Dendritic cell treated with granulocyte-macrophage colony-stimulating factor and Interleukin-4, amounts not matched to agents 40 ng/mL and 50 ng/mL, for 4 days (primary cell): ENCODE measurements at regions of chr2 and their contacts with region 1.

Region 1: DNA sequence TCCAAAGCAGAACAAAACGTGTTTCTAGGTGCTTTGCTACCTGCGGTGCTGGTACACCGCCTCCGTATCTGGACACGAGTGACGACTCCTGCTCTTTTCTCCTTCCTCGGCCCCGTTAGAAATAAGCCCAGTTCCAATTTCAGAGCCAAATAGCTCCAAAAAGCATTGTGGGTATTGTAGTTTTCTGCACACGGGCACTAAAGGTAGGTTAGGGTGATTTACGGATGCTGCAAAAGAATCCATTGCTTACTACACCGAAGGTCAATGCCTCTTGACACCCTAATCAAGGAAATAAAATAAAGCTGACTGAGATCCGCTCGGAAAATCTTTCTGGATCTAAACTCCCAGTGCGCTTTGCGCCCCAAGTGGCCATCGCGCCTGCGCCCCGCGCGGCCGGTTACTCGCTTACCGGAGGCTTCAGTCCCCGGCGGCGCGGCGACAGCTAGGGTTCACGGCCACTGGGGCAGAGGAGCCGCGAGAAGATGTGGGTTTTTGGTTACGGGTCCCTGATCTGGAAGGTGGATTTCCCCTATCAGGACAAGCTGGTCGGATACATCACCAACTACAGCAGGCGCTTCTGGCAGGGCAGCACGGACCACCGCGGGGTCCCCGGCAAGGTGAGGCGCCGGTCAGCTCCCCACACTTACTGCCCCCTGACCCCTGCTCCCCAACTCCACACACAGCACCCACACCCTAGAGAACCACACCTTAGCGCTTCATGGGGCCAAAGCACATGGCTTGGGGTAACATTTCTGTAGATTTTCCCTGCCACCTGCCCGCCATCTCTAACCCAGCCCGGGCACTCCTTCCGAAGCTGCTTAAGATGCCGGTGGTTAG is at the start of gene CHAC2:
- H3K4me3 Mint-ChIP-seq: peak within 1 kb of the TSS; percentile 91
- H3K27ac Mint-ChIP-seq: peak within 1 kb of the TSS; percentile 86
- H3K4me1 Mint-ChIP-seq: peaks cover 6% of the 10 kb centered on the region
- H3K27me3 Mint-ChIP-seq: no peaks in the 10 kb centered on the region

Region 2: GRCh38 chr2:53786705-53787612 is 19.3 kb after region 1 on chr2 and contains the starts of genes ASB3 and ERLEC1:
- intact Hi-C with region 1: loop called (anchors 2 kb)
- H3K4me3 Mint-ChIP-seq: peak within 1 kb of the TSS; percentile 97
- H3K27ac Mint-ChIP-seq: peak within 1 kb of the TSS; percentile 92
- H3K4me1 Mint-ChIP-seq: peaks cover 32% of the 10 kb centered on the region
- H3K27me3 Mint-ChIP-seq: no peaks in the 10 kb centered on the region